ENCODE measurements at regions of chr6 and their contacts with region 1.

Region 1: DNA sequence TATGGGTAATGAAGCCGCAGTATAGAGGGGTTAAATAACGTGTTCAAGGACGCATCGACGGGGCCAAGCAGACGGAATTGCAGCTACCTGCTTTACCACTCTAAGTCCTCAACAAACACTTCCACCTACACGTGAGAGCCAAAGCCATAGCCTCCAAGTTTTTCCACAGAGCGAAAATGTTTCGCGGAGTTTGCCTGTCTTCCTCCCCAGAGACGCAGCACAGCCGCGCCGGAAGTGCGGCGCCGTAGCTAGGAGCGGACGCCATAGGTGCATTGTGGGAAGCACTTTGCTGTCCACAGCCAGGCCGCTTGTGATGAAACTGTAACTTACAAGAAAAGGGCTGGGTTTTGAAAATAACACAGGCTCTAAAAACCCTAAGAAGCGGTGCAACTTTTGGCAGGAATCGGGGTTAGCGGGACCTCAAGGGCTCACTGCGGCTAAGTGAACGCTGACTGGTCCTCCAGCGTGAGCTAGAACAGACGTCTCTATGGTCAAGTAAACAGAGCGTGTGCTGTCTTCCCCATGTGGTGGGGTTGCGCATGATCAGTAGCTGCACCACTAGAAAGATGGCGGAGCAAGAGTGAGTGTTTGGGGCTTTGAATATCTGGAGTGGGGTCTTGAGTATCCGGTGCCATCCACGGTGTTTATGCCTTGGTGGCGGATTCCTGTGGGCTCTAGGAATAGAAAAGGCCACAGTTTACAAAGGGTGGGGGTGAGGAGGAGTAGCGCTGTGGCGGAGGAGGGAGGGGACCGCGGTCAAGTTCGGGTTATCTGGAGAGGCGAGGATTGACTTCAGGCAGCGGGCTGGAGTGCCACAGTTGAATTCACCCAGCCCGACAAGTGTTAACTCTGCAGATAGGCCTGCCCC is at the start of gene RPL7L1:
- H3K4me3 Mint-ChIP-seq: peak within 1 kb of the TSS; percentile 99
- H3K27ac Mint-ChIP-seq: peak within 1 kb of the TSS; percentile 98
- H3K4me1 Mint-ChIP-seq: peaks cover 6% of the 10 kb centered on the region
- H3K27me3 Mint-ChIP-seq: no peaks in the 10 kb centered on the region

Region 2: DNA sequence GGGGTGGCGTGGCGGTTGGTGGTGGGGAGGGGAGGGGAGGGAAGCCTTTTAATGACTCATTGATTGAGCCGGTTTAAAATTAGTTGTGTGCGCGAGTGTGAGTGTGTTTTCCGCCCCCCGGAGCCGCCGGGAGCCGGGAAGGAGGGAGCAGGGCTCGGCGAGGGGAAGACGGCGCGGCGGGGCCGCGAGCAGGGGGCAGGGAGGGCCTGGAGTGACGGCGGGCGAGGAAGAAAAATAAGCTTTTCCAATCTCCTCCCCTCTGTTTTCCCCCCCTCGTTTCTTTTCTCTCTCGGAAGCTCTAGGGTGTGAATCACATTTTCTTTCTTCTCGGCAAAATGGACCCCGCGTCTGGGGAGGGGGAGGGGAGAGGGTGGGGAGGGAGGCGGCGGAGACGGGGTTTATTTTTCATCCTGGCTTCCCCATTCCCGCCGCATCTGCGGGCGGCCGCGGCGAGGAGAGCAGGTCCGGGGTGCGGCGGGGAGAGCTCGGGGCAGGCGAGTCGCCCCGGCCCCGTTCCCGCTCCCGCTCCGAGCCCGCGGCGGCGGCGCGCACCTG is 96.9 kb before region 1 on chr6:
- intact Hi-C with region 1: loop called (anchors 10 kb)
- H3K4me3 Mint-ChIP-seq: peak overlapping the region; percentile 89
- H3K27ac Mint-ChIP-seq: no peak overlapping the region
- H3K4me1 Mint-ChIP-seq: peaks cover 7% of the 10 kb centered on the region
- H3K27me3 Mint-ChIP-seq: no peaks in the 10 kb centered on the region